ENCODE measurements at regions of chr7 and their contacts with region 1.

Region 1: GRCh38 chr7:130242198-130243014 is 24.3 kb upstream of the CPA2 start:
- DNase-seq: peak; percentile 21 to 79 (median 58)
- ATAC-seq: peak; percentile 85
- H3K4me3 ChIP-seq: no peak overlapping the region
- H3K4me3 Mint-ChIP-seq: no peak overlapping the region
- H3K27ac ChIP-seq: no peak overlapping the region
- H3K27ac Mint-ChIP-seq: no peak overlapping the region
- H3K4me1 ChIP-seq: no peaks in the 10 kb centered on the region
- H3K4me1 Mint-ChIP-seq: peaks cover 8% of the 10 kb centered on the region
- H3K27me3 ChIP-seq: peaks cover 0 to 6% of the 10 kb centered on the region in 2 experiments
- H3K27me3 Mint-ChIP-seq: no peaks in the 10 kb centered on the region
- CTCF ChIP-seq: peak; percentile 78

Region 2: DNA sequence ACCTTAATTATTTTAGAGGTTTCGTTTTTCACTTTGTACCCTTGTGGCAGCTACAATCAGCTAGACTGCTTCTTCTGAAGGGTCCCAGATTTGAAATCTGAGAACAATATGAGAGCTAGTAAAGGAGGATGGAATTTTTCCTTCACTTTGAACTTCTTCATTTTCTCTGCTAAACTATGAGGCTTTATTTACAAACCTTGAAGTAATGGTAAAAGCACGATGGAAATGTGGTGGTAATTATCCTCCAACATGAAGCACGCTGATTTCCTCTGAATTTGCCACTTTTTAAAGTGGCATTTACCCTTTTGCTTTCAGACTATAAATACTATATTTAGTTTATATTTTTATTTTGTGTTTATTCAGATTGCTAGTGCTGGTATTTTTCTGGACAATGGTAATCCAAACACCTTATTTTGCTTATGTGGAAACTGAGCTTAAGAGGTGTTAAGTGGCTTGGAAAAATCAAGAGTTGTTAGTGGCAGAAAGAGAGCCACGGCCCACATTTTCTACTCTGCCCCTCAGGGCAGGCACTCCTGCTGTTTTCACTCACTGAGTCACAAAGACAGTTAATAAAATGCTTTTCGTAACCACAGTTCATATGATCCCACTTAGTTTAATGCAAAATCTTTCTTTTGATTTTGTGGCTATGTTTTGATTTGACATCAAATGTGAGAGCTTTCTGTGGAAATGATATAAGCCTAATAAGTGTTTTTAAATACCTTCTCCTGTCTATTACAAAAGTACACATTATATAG is 32.0 kb before region 1 on chr7:
- CTCF ChIA-PET with region 1: interaction called, 3 read pairs
- POLR2A ChIA-PET with region 1: no interaction called
- intact Hi-C with region 1: loop called in 1 of 2 experiments (anchors 1 kb)
- DNase-seq: no peak
- ATAC-seq: no peak
- H3K4me3 ChIP-seq: no peak overlapping the region
- H3K4me3 Mint-ChIP-seq: no peak overlapping the region
- H3K27ac ChIP-seq: no peak overlapping the region
- H3K27ac Mint-ChIP-seq: no peak overlapping the region
- H3K4me1 ChIP-seq: peaks cover 5% of the 10 kb centered on the region
- H3K4me1 Mint-ChIP-seq: peaks cover 5% of the 10 kb centered on the region
- H3K27me3 ChIP-seq: no peaks in the 10 kb centered on the region
- H3K27me3 Mint-ChIP-seq: peaks cover 13% of the 10 kb centered on the region
- CTCF ChIP-seq: no peak

Region 3: DNA sequence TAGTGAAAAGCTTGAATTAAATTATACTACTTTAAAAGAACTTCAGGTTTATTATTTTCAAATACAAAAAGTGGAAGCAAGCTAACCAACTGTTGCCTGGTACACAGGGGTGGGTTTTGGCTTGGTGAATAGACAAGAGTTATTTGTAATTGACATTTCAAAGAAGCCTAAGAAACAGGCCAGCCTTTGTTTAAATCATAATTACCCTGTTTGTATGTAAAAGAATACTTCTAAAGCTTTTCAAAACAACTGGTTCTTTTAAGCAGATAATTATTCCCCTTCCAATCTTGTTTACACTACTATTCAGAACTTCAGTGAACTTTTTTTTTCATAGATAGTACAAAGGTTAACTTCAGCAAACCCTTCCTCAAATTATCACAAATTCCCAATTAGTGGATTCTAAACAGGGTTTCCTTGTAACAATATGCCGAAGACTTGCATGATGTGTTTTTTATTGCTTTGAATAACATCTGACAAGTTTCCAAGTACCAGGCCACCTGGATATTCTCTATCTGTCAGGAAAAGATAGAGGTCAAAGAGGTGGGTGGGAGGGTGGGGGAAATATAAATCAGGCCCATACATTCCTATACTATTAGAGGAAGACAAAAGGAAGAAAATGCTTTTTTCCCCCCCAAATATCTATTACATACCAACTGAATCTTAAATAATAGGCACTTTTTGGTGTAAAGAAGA is 14.4 kb before region 1 on chr7:
- CTCF ChIA-PET with region 1: no interaction called
- POLR2A ChIA-PET with region 1: no interaction called
- intact Hi-C with region 1: no loop called
- DNase-seq: no peak
- ATAC-seq: no peak
- H3K4me3 ChIP-seq: no peak overlapping the region
- H3K4me3 Mint-ChIP-seq: no peak overlapping the region
- H3K27ac ChIP-seq: no peak overlapping the region
- H3K27ac Mint-ChIP-seq: no peak overlapping the region
- H3K4me1 ChIP-seq: no peaks in the 10 kb centered on the region
- H3K4me1 Mint-ChIP-seq: no peaks in the 10 kb centered on the region
- H3K27me3 ChIP-seq: no peaks in the 10 kb centered on the region
- H3K27me3 Mint-ChIP-seq: no peaks in the 10 kb centered on the region
- CTCF ChIP-seq: no peak

Region 4: GRCh38 chr7:130463553-130464434 is 221.4 kb after region 1 on chr7:
- CTCF ChIA-PET with region 1: interaction called, 9 read pairs
- POLR2A ChIA-PET with region 1: no interaction called
- intact Hi-C with region 1: loop called (anchors 1 to 2 kb)
- DNase-seq: peak in 1 of 9 experiments; percentile 48
- ATAC-seq: peak; percentile 38
- H3K4me3 ChIP-seq: no peak overlapping the region
- H3K4me3 Mint-ChIP-seq: no peak overlapping the region
- H3K27ac ChIP-seq: no peak overlapping the region
- H3K27ac Mint-ChIP-seq: peak overlapping the region; percentile 8
- H3K4me1 ChIP-seq: peaks cover 2% of the 10 kb centered on the region
- H3K4me1 Mint-ChIP-seq: peaks cover 10% of the 10 kb centered on the region
- H3K27me3 ChIP-seq: no peaks in the 10 kb centered on the region
- H3K27me3 Mint-ChIP-seq: no peaks in the 10 kb centered on the region
- CTCF ChIP-seq: no peak

Region 5: DNA sequence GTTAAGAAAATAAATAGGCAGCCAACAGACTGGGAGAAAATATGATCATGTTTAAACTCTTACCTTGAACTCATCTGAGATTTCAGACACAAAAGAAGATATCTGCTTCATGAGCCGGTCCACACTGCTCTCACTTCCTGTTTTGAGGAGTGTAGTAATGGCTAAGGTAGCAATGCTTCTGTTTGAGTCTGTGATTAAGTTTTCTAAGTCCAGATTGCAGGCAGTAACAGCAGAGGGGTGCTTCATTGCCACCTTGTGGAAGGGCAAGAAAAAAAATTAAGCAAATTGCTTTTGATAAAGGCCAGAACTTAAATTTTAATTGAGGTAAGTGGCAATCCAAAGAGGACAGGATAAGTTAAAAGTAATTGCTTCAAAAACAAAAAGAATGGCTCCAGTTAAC is 318.6 kb after region 1 on chr7:
- CTCF ChIA-PET with region 1: no interaction called
- POLR2A ChIA-PET with region 1: no interaction called
- intact Hi-C with region 1: loop called (anchors 1 to 2 kb)
- DNase-seq: peak in 2 of 9 experiments; percentile 7 to 29
- ATAC-seq: no peak
- H3K4me3 ChIP-seq: no peak overlapping the region
- H3K4me3 Mint-ChIP-seq: no peak overlapping the region
- H3K27ac ChIP-seq: no peak overlapping the region
- H3K27ac Mint-ChIP-seq: peak overlapping the region; percentile 35
- H3K4me1 ChIP-seq: no peaks in the 10 kb centered on the region
- H3K4me1 Mint-ChIP-seq: peaks cover 4% of the 10 kb centered on the region
- H3K27me3 ChIP-seq: no peaks in the 10 kb centered on the region
- H3K27me3 Mint-ChIP-seq: no peaks in the 10 kb centered on the region
- CTCF ChIP-seq: no peak

Region 6: DNA sequence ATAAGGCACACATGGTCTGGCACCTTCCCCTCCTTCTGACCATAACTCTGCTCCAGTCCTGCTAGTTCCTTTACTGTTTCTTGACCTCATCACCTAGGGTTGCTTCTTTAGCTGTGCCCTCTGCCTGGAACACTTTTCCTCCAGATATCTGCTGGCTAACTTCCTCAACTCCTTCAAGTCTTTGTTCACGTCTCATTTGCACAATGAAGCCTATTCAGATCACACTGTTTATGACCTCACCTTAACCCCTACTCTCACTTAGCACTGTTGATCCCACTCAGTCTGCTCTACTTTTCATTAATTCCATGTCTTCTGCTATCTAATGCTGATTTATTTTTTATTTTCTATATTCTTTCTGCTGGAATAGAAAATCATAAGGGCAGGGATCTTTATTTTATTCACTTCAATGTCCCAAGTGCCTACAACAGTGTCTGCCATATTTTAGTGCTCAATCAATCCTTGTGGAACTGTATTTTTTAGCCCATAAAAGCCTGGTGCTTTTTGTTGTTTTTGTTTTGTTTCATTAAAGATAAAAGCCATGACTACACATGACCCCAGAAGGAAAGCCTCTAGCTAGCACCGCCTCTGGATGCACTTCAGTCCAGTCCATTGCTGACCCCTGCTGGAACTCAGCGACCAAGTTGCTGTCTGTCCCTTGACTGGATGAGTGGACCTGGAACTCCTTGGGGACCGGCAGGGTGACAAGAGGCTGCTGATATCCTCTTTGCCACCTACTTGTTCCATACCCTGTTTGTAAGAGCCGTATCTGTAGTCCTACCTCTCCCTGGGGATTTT is 479.3 kb after region 1 on chr7:
- CTCF ChIA-PET with region 1: no interaction called
- POLR2A ChIA-PET with region 1: no interaction called
- intact Hi-C with region 1: loop called in 1 of 2 experiments (anchors 1 kb)
- DNase-seq: peak in 4 of 9 experiments; percentile 12 to 49 (median 36)
- ATAC-seq: no peak
- H3K4me3 ChIP-seq: no peak overlapping the region
- H3K4me3 Mint-ChIP-seq: no peak overlapping the region
- H3K27ac ChIP-seq: no peak overlapping the region
- H3K27ac Mint-ChIP-seq: no peak overlapping the region
- H3K4me1 ChIP-seq: no peaks in the 10 kb centered on the region
- H3K4me1 Mint-ChIP-seq: no peaks in the 10 kb centered on the region
- H3K27me3 ChIP-seq: peaks cover 0 to 4% of the 10 kb centered on the region in 2 experiments
- H3K27me3 Mint-ChIP-seq: peaks cover 22% of the 10 kb centered on the region
- CTCF ChIP-seq: no peak

Region 7: DNA sequence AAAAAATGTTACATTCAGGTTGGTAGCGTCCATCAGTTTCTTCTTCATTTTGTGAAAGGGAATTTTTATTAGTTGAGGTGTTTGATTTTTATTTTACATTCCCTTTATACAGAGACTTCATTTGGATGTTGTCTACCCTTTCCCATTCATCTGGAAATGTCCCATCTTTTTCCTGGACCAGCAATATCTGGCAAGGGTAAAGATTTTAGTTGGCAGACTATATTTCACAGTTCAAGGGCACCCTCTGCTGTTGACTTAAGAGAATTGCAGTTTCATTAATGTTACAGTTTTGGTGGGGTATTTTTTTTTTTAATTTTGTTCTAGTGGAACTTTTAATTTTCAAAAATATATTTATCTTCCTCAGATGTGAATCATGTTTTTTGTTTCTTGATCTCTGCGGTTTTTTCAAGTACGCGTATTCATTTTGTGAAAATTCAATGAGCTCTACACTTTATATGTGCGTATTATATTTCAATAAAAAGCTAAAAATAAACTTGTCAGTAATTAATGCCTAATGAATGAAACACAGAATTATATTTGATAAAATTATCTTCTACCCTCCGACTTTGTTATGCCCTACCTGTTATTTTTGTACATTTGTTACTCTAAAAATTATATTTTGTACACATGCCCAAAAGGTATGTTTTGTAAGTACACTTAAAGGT is 589.5 kb after region 1 on chr7:
- CTCF ChIA-PET with region 1: no interaction called
- POLR2A ChIA-PET with region 1: no interaction called
- intact Hi-C with region 1: loop called (anchors 1 kb)
- DNase-seq: peak in 2 of 9 experiments; percentile 59 to 67
- ATAC-seq: peak; percentile 42
- H3K4me3 ChIP-seq: no peak overlapping the region
- H3K4me3 Mint-ChIP-seq: no peak overlapping the region
- H3K27ac ChIP-seq: no peak overlapping the region
- H3K27ac Mint-ChIP-seq: no peak overlapping the region
- H3K4me1 ChIP-seq: no peaks in the 10 kb centered on the region
- H3K4me1 Mint-ChIP-seq: no peaks in the 10 kb centered on the region
- H3K27me3 ChIP-seq: no peaks in the 10 kb centered on the region
- H3K27me3 Mint-ChIP-seq: no peaks in the 10 kb centered on the region
- CTCF ChIP-seq: peak; percentile 84

Measured in CD8-positive, alpha-beta T cell (primary cell).